Activated naive CD4-positive, alpha-beta T cell treated with anti-CD3 and anti-CD28 coated beads, Interleukin-2, amount 10 ng/mL, durations not matched to agents 7 days and 5 days (primary cell): ENCODE measurements at regions of chr3 and their contacts with region 1.

Region 1: GRCh38 chr3:198051836-198052235 is 91.8 kb downstream of the LMLN start:
- DNase-seq: no peak
- H3K4me3 Mint-ChIP-seq: no peak overlapping the region
- H3K27ac Mint-ChIP-seq: no peak overlapping the region
- H3K4me1 Mint-ChIP-seq: no peaks in the 10 kb centered on the region
- H3K27me3 Mint-ChIP-seq: peaks cover 19% of the 10 kb centered on the region

Region 2: GRCh38 chr3:198080521-198081280 is 28.9 kb after region 1 on chr3:
- CTCF ChIA-PET with region 1: interaction called, 10 read pairs
- DNase-seq: peak; percentile 84
- H3K4me3 Mint-ChIP-seq: peak overlapping the region; percentile 73
- H3K27ac Mint-ChIP-seq: peak overlapping the region; percentile 80
- H3K4me1 Mint-ChIP-seq: peaks cover 9% of the 10 kb centered on the region
- H3K27me3 Mint-ChIP-seq: peaks cover 49% of the 10 kb centered on the region

Region 3: GRCh38 chr3:198093112-198093679 is 41.4 kb after region 1 on chr3:
- CTCF ChIA-PET with region 1: no interaction called
- DNase-seq: no peak
- H3K4me3 Mint-ChIP-seq: no peak overlapping the region
- H3K27ac Mint-ChIP-seq: no peak overlapping the region
- H3K4me1 Mint-ChIP-seq: no peaks in the 10 kb centered on the region
- H3K27me3 Mint-ChIP-seq: peaks cover 19% of the 10 kb centered on the region